B cell (primary cell): ENCODE measurements at regions of chr14 and their contacts with region 1.

Region 1: DNA sequence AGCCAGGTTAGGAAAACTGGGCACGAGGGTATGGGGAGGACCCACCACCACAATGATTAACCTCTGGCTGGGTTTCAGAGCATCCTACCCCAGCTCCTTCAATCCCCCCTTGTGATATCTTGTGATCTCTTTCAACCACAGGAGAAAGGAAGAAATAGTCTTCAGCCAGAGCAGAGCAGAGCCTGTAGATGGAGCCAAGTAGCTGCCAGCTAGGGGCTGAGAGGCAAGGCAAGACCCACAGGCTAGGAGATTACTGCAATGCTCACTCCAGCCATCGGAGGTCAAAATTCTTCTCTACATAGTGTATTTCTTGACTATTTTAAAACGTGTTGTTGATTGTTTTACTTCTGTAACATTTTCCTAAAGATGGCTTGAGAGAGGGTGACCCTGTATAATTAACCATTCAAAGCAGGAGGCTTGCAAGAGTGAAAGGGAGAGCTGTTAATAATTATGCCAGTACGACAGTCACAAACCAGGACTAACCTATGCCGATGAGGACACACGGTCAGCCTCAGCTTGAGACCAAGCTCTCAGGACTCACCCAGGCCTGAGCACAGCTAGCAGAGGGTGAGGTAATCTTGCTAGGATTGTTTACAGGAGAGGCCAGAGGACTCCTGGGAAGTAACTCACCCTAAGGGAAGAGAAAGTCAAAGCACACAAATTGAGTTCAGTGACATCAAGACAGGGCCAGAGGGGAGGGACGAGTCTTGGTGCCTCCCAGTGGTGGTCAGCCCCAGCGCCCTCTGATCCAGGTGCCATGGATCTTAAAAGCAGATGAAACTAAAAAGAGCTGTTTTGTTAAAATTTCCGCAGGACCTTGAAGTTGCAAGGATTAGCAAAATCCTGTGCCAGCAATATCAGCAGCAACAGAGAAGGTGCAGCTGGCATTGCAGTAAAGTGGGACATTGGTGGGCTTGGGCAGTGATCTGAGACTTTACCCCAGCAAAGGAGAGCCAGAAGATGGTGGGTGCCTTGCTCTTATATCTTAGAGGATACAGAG is 29.8 kb upstream of the CDKN3 start:
- DNase-seq: peak; percentile 36
- ATAC-seq: peak; percentile 85
- H3K4me3 ChIP-seq: no peak overlapping the region
- H3K4me3 Mint-ChIP-seq: no peak overlapping the region
- H3K27ac ChIP-seq: no peak overlapping the region
- H3K27ac Mint-ChIP-seq: no peak overlapping the region
- H3K4me1 ChIP-seq: no peaks in the 10 kb centered on the region
- H3K4me1 Mint-ChIP-seq: peaks cover 1% of the 10 kb centered on the region
- H3K27me3 ChIP-seq: no peaks in the 10 kb centered on the region
- H3K27me3 Mint-ChIP-seq: peaks cover 25% of the 10 kb centered on the region
- CTCF ChIP-seq: peak; percentile 45

Region 2: DNA sequence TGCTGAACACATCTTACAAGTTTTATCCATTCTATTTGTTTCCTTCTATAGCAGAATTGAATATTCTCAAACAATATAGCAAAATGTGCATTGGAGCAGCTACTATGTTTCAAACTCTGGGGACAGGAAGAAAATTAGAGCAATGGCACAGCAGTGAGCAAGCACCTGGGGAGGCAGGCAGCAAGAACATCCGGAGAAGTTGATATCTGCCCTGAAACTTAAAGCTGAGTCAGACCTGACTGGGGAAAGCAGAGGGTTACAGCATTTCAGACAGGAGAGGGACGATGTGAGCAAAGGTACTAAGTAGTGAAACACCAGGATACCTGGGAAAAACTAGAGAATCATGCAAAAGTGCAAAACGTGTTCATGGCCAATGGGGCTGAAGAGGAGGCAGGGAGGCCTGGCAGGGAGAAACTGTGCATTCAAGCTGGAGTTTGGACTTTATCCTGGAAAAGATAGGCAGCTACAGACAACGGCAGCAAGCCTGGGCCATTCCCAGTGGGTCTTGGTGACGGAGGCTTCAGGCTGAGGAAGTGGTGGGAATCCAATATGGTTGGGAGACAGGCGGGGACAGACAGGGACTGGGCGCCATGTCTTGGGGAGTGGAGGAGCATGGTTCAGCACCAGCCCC is 88.3 kb before region 1 on chr14:
- CTCF ChIA-PET with region 1: no interaction called
- POLR2A ChIA-PET with region 1: no interaction called
- intact Hi-C with region 1: no loop called
- DNase-seq: no peak
- ATAC-seq: no peak
- H3K4me3 ChIP-seq: no peak overlapping the region
- H3K4me3 Mint-ChIP-seq: no peak overlapping the region
- H3K27ac ChIP-seq: no peak overlapping the region
- H3K27ac Mint-ChIP-seq: no peak overlapping the region
- H3K4me1 ChIP-seq: no peaks in the 10 kb centered on the region
- H3K4me1 Mint-ChIP-seq: no peaks in the 10 kb centered on the region
- H3K27me3 ChIP-seq: no peaks in the 10 kb centered on the region
- H3K27me3 Mint-ChIP-seq: peaks cover 20% of the 10 kb centered on the region
- CTCF ChIP-seq: no peak

Region 3: GRCh38 chr14:54420013-54420809 is 53.2 kb after region 1 on chr14:
- CTCF ChIA-PET with region 1: interaction called, 3 read pairs
- POLR2A ChIA-PET with region 1: no interaction called
- intact Hi-C with region 1: loop called (anchors 2 kb)
- DNase-seq: peak; percentile 17
- ATAC-seq: peak; percentile 31
- H3K4me3 ChIP-seq: no peak overlapping the region
- H3K4me3 Mint-ChIP-seq: no peak overlapping the region
- H3K27ac ChIP-seq: no peak overlapping the region
- H3K27ac Mint-ChIP-seq: no peak overlapping the region
- H3K4me1 ChIP-seq: no peaks in the 10 kb centered on the region
- H3K4me1 Mint-ChIP-seq: peaks cover 3% of the 10 kb centered on the region
- H3K27me3 ChIP-seq: no peaks in the 10 kb centered on the region
- H3K27me3 Mint-ChIP-seq: no peaks in the 10 kb centered on the region
- CTCF ChIP-seq: peak; percentile 41